PC-3 (cell line): ENCODE measurements at regions of chr5 and their contacts with region 1.

Region 1: DNA sequence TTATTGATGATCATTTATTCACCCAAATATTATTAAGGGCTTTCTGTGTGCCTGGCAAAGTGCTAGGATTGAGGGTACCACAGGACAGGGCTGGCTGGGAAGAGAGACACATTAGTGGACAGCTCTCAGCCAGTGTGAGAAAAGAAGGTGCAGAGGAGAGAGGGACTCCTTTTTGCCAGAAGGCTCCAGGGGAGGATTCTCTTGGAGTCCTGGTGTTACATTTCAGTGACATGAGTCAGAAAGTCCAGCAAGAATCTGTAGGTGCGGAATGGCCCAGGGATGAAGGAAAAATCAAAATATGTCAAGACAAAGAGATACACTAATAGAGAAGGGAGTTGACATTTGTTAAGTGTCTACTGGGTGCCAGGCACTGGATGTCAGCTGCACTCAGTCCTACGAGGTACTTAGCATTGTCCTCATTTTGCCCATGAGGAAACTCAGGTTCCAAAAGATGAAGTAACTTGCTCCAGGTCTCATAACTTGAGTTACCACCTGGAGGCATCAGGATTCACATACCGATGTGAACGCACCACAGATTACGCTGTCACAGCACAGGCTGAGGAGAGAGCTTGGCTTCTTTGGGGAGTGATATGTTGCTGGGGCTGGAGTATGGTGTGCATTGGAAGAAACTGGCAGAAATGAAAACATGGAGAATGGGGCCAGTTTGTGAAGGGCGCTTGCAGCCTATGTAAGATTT is 60.5 kb downstream of the RASGRF2 start:
- DNase-seq: peak; percentile 38
- ATAC-seq: peak; percentile 57
- H3K4me3 ChIP-seq: no peak overlapping the region
- H3K27ac ChIP-seq: no peak overlapping the region
- H3K4me1 ChIP-seq: peaks cover 10% of the 10 kb centered on the region
- H3K27me3 ChIP-seq: no peaks in the 10 kb centered on the region
- CTCF ChIP-seq: no peak

Region 2: GRCh38 chr5:80654391-80655230 is 366.0 kb before region 1 on chr5 and contains the starts of genes DHFR and MSH3:
- CTCF ChIA-PET with region 1: no interaction called
- POLR2A ChIA-PET with region 1: no interaction called
- intact Hi-C with region 1: no loop called
- DNase-seq: peak; percentile 88
- ATAC-seq: peak; percentile 61
- H3K4me3 ChIP-seq: peak within 1 kb of the TSS; percentile 99
- H3K27ac ChIP-seq: peak within 1 kb of the TSS; percentile 69
- H3K4me1 ChIP-seq: peaks cover 8% of the 10 kb centered on the region
- H3K27me3 ChIP-seq: no peaks in the 10 kb centered on the region
- CTCF ChIP-seq: peak; percentile 30; the same call in 1 of the 2 replicates
- total RNA-seq, gene DHFR: 21.4 and 22.0 TPM in 2 replicates
- total RNA-seq, gene MSH3: 9.0 TPM in 2 replicates

Region 3: GRCh38 chr5:81068063-81068462 is 47.4 kb after region 1 on chr5:
- CTCF ChIA-PET with region 1: no interaction called
- POLR2A ChIA-PET with region 1: no interaction called
- intact Hi-C with region 1: no loop called
- DNase-seq: no peak
- ATAC-seq: no peak
- H3K4me3 ChIP-seq: no peak overlapping the region
- H3K27ac ChIP-seq: no peak overlapping the region
- H3K4me1 ChIP-seq: no peaks in the 10 kb centered on the region
- H3K27me3 ChIP-seq: no peaks in the 10 kb centered on the region
- CTCF ChIP-seq: no peak

Region 4: GRCh38 chr5:81247441-81247972 is 226.9 kb after region 1 on chr5:
- CTCF ChIA-PET with region 1: interaction called, 14 read pairs
- POLR2A ChIA-PET with region 1: no interaction called
- intact Hi-C with region 1: no loop called
- DNase-seq: peak; percentile 14
- ATAC-seq: no peak
- H3K4me3 ChIP-seq: no peak overlapping the region
- H3K27ac ChIP-seq: no peak overlapping the region
- H3K4me1 ChIP-seq: peaks cover 17% of the 10 kb centered on the region
- H3K27me3 ChIP-seq: no peaks in the 10 kb centered on the region
- CTCF ChIP-seq: no peak